ENCODE measurements at regions of chr10 and their contacts with region 1.

Region 1: DNA sequence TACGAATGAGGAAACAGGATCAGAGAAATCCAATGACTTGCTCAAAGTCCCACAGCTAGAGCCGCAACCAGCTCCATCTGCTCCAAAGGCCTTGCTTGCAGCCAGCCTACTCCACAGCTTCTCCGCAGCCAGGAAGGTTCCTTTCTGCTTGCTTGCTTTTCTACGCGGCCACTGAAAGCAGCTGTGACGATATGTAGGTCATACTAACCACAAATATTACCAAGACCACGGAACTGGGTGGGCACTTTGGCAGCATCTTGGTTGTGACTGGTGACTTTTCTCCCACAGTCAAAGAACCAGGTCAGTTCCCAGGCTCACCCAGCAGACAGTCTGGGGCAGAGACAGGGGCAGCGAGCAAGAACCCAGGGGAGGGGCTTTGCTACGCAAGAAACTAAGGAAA is 86.4 kb downstream of the FAM53B start:
- DNase-seq: peak; percentile 63 to 82
- ATAC-seq: peak; percentile 65 to 77 (median 71)
- H3K4me3 ChIP-seq: no peak overlapping the region
- H3K4me3 Mint-ChIP-seq: peak overlapping the region; percentile 80
- H3K27ac ChIP-seq: peak overlapping the region; percentile 96
- H3K27ac Mint-ChIP-seq: peak overlapping the region; percentile 95 to 99
- H3K4me1 ChIP-seq: peaks cover 94% of the 10 kb centered on the region
- H3K4me1 Mint-ChIP-seq: peaks cover 58 to 81% of the 10 kb centered on the region in 2 donors
- H3K27me3 ChIP-seq: no peaks in the 10 kb centered on the region
- H3K27me3 Mint-ChIP-seq: no peaks in the 10 kb centered on the region
- CTCF ChIP-seq: no peak

Region 2: GRCh38 chr10:123772645-123773508 is 884.9 kb before region 1 on chr10:
- intact Hi-C with region 1: loop called (anchors 10 kb)
- DNase-seq: peak; percentile 43 to 61
- ATAC-seq: peak in 2 of 3 donors; percentile 32 to 46
- H3K4me3 ChIP-seq: no peak overlapping the region
- H3K4me3 Mint-ChIP-seq: peak overlapping the region; percentile 93
- H3K27ac ChIP-seq: peak overlapping the region; percentile 36
- H3K27ac Mint-ChIP-seq: peak overlapping the region; percentile 97 to 98
- H3K4me1 ChIP-seq: peaks cover 10% of the 10 kb centered on the region
- H3K4me1 Mint-ChIP-seq: peaks cover 35 to 39% of the 10 kb centered on the region in 2 donors
- H3K27me3 ChIP-seq: no peaks in the 10 kb centered on the region
- H3K27me3 Mint-ChIP-seq: peaks cover 13 to 15% of the 10 kb centered on the region in 2 donors
- CTCF ChIP-seq: no peak

Region 3: DNA sequence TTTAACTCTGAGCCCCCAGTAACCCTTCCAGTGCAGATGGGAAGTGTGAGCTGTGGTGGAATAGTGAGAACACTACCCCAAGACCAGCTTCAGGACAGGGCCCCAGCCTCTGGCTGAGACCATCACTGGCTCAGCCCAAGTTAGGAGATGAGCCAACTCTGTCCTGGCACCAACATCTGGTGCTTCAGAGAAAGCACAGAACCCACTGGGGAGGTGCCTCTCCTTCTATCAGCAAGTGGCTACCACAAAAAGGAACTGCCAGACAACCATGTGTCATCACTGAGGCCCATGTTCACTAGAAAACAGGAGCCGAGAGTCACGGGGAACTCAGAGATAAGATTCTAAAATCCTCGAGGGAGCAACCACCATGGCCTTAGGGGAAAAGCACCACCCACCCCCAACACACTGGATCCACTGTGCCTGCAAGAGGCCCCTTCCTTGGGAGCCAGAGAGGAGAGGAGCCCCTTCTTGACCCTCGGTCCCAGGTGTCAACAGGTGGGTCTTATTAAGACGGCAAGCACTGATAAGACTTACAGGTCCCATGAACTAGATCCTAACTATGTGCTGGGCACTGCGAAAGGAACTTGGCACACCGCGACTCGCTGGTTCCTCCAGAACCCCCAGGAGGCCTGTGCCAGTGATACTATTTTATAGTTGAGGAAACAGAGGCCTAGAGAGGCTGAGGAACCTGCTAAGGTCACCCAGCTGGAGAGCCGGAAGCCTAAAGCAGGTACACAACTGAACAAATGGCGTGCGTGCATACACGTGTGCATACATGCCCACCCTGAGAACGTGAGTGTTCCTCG is 16.3 kb before region 1 on chr10:
- intact Hi-C with region 1: loop called (anchors 2 kb)
- DNase-seq: peak; percentile 54 to 77
- ATAC-seq: peak; percentile 64 to 84 (median 75)
- H3K4me3 ChIP-seq: no peak overlapping the region
- H3K4me3 Mint-ChIP-seq: peak overlapping the region; percentile 77
- H3K27ac ChIP-seq: peak overlapping the region; percentile 92
- H3K27ac Mint-ChIP-seq: peak overlapping the region; percentile 96 to 99
- H3K4me1 ChIP-seq: peaks cover 98% of the 10 kb centered on the region
- H3K4me1 Mint-ChIP-seq: peaks cover 53 to 91% of the 10 kb centered on the region in 2 donors
- H3K27me3 ChIP-seq: no peaks in the 10 kb centered on the region
- H3K27me3 Mint-ChIP-seq: no peaks in the 10 kb centered on the region
- CTCF ChIP-seq: no peak

Region 4: DNA sequence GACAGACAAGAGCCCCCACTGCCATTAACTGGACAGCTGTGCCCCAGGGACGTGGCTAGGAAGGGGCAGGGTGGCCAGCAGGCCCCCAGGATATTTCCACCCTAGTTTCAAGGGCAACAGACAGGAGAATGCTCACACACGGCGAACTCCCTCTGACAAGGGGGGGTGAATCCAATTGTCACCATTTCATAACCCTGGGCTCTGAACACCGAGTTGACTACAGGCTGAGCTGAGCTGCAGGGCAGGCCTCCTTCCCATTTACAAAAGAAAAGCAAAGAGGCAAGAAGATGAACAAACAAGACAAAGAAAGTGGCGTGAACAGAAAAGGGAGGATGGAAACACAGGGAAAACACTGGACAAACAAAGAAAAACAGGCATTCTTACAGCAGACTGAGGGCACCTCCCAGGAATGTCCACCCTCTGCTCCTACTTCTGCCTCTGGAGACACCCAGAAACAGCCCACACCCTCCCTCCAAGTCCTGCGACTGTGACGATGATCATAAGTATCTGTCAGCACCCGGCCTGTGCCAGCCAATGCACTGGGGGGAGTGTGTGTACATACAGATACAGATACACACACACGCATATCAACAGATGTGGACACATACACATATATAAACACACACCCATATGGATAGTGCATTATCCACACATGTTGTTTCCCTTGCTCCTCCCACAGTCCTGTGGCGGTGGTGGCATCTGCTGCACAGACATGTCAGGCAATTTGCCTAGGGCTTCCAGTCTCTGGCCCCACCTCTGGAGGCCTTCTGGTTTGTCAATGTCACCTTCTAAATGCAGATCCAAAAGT is 20.1 kb after region 1 on chr10:
- intact Hi-C with region 1: loop called (anchors 2 kb)
- DNase-seq: peak in 1 of 2 donors; percentile 38
- ATAC-seq: peak; percentile 12 to 25 (median 18)
- H3K4me3 ChIP-seq: no peak overlapping the region
- H3K4me3 Mint-ChIP-seq: peak overlapping the region; percentile 87
- H3K27ac ChIP-seq: peak overlapping the region; percentile 63
- H3K27ac Mint-ChIP-seq: peak overlapping the region; percentile 93 to 96
- H3K4me1 ChIP-seq: peaks cover 96% of the 10 kb centered on the region
- H3K4me1 Mint-ChIP-seq: peaks cover 72 to 90% of the 10 kb centered on the region in 2 donors
- H3K27me3 ChIP-seq: no peaks in the 10 kb centered on the region
- H3K27me3 Mint-ChIP-seq: no peaks in the 10 kb centered on the region
- CTCF ChIP-seq: no peak

Region 5: DNA sequence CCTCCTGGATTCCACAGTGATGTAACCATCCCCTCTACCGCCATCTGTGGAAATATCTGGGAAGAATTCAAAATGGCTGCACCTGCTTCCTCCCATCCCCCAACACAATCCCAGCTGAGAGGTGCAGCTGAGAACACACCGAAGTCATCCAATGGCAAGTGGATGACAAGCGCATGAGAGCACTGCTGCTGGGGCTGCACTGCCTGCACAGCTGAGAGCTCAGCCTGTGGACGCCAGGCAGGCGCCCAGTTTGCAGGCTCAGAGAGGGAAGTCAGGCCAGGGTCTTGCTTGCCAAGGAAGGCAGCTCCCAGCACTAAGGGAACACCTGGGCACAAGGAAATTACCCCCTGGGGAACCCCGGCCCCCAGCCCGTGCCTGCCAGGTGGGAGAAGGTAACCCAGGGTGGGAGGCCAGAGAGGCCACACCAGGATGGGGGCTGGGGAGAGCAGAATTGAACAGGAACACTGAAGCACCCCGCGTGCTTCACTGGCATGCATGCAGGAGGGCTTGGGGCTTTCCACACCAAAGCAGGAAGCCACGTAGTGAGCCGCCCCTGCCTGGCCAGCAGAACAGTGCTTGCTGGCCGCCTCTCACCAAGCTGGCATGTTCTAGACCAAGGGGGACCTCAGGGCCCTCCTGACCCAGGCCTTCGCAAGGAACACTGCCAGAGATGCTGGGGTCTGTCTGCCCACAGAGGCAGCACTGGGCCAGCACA is 40.2 kb after region 1 on chr10:
- intact Hi-C with region 1: no loop called
- DNase-seq: peak; percentile 54 to 83
- ATAC-seq: peak; percentile 69 to 78 (median 72)
- H3K4me3 ChIP-seq: no peak overlapping the region
- H3K4me3 Mint-ChIP-seq: peak overlapping the region; percentile 70
- H3K27ac ChIP-seq: peak overlapping the region; percentile 88
- H3K27ac Mint-ChIP-seq: peak overlapping the region; percentile 89 to 95
- H3K4me1 ChIP-seq: peaks cover 96% of the 10 kb centered on the region
- H3K4me1 Mint-ChIP-seq: peaks cover 92 to 93% of the 10 kb centered on the region in 2 donors
- H3K27me3 ChIP-seq: no peaks in the 10 kb centered on the region
- H3K27me3 Mint-ChIP-seq: no peaks in the 10 kb centered on the region
- CTCF ChIP-seq: no peak

Measured in natural killer cell (primary cell).